Heart right ventricle (tissue), 16 donors: ENCODE measurements at regions of chr10 and their contacts with region 1.

Region 1: DNA sequence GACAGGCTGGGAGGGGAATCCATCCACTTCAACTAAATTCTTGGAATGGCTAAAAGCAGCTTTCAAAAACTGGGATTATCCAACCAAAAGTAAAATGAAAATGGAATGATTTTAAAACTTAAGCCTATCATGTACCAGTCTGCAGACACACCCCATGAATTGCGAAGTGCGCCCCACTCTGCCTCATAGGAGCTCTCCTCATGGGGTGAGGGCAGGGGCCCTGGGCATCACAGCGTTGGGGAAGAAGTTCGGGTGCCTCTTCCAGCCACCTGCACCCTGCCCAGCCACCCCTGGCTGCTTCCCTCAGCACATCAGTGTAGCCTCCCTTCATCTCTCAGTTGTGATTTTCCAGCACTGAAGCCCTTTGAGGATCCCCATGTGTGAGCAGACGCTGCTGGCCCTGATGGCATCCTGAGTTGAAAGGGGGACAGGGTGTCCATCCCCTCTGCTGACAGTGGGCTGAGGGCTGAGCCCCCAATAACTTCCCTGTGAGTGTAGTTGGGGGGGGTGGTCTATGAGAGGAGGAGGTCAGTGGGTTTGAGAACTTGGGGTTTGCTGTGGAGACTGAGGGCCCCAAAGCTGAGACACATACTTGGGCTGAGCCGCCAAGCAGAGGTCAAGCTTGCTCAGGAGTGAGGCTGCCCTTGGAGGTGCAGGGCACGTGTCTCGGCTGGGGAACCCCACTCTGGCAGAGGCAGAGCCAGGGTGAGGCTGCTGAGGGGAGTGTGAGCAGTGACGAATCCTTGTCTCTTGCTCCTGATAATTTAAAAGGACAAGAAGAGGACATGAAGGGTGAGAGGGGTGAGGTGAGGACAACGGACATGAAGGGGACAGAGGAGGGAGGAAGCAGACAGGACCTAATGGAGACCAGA is 542.1 kb downstream of the TCERG1L start:
- DNase-seq: no peak
- ATAC-seq: no peak
- H3K4me3 ChIP-seq: no peak overlapping the region
- H3K27ac ChIP-seq: no peak overlapping the region
- H3K4me1 ChIP-seq: no peaks in the 10 kb centered on the region
- H3K27me3 ChIP-seq: peaks cover 0 to 39% (median 22%) of the 10 kb centered on the region in 7 donors
- CTCF ChIP-seq: no peak

Region 2: DNA sequence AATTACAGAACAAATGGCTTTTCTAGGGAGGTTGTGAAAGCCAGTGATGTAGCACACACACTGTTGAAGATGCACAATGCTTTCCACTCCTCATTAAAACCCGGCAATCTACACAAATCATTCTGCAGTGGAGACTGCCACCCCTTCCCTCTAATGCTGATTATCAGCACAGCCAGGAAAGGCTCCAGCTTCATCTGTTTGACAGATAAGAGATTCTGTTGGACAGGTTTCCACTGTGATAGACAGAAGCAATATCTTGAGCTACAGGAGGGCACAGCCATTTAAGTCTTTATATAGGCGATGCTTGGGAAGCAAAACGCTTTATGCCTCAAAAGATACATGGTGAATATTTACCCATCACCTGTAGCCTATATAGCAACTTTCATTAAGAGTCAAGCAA is 77.6 kb before region 1 on chr10:
- intact Hi-C with region 1: no loop called
- DNase-seq: no peak
- ATAC-seq: no peak
- H3K4me3 ChIP-seq: no peak overlapping the region
- H3K27ac ChIP-seq: no peak overlapping the region
- H3K4me1 ChIP-seq: no peaks in the 10 kb centered on the region
- H3K27me3 ChIP-seq: peaks cover 0 to 29% (median 4%) of the 10 kb centered on the region in 7 donors
- CTCF ChIP-seq: no peak

Region 3: DNA sequence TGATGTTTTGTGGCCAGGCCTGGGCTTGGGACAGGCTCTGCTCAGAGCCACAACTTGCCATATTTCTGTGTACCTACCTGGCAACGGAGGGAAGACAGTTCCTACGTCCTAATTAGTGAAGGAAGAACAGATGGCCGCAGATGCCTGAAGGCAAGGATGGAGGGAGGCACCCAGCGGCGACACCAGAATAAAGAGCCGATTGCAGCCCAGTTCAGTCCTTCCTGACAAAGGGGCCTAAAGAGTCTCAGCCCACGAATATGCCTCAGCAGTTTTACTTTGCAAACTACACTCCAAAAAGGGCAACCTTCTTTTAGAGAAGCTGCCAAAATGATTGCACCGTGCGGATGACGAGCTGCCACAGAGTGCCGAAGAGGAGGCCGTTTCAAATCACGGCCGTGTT is 47.4 kb before region 1 on chr10:
- intact Hi-C with region 1: no loop called
- DNase-seq: no peak
- ATAC-seq: no peak
- H3K4me3 ChIP-seq: no peak overlapping the region
- H3K27ac ChIP-seq: no peak overlapping the region
- H3K4me1 ChIP-seq: no peaks in the 10 kb centered on the region
- H3K27me3 ChIP-seq: peaks cover 0 to 29% (median 5%) of the 10 kb centered on the region in 7 donors
- CTCF ChIP-seq: no peak

Region 4: DNA sequence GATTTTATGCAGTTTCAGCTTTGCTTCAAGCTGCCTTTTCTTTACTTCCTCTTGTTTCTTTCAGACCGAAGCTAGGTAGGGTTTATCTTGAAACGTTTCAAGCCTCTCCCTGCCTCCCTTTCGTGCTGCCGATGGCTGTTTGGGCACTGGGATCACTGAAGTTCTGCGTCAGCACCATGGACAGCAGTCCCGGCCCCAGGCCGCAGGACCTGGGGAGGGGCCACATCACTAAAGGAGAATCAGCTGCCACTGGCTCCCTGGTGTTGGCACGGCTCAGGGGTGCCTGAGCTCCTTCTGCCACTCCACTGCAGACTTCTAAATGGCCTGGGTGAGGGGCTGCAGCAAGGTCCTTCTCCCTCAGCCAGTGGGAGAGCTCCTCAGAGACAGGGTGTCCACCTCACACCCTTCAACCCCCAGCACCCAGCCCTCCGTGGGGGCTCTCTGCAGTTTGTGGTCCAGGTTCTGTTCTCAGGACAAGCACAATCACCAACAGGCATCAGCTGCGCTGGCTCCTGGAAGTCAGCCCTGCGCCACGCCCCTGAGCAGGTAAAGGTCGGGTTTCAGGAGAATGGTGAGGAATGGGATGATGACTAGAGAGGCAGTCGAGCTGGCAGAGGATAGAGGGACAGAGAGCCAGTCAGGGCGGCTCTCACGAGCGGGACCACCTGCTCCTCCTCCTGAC is 154.9 kb after region 1 on chr10:
- intact Hi-C with region 1: no loop called
- DNase-seq: no peak
- ATAC-seq: no peak
- H3K4me3 ChIP-seq: no peak overlapping the region
- H3K27ac ChIP-seq: no peak overlapping the region
- H3K4me1 ChIP-seq: no peaks in the 10 kb centered on the region
- H3K27me3 ChIP-seq: peaks cover 0 to 43% (median 16%) of the 10 kb centered on the region in 7 donors
- CTCF ChIP-seq: no peak

Region 5: GRCh38 chr10:131748831-131749766 is 979.7 kb after region 1 on chr10:
- intact Hi-C with region 1: loop called in 1 of 10 experiments (anchors 5 kb)
- DNase-seq: no peak
- ATAC-seq: no peak
- H3K4me3 ChIP-seq: no peak overlapping the region
- H3K27ac ChIP-seq: no peak overlapping the region
- H3K4me1 ChIP-seq: no peaks in the 10 kb centered on the region
- H3K27me3 ChIP-seq: peaks cover 0 to 77% (median 58%) of the 10 kb centered on the region in 7 donors
- CTCF ChIP-seq: no peak